Heart left ventricle (tissue), 16 donors: ENCODE measurements at regions of chr18 and their contacts with region 1.

Region 1: GRCh38 chr18:23416298-23416697 is 36.8 kb upstream of the RIOK3 start:
- DNase-seq: no peak
- ATAC-seq: peak in 3 of 4 donors; percentile 33 to 70 (median 57)
- H3K4me3 ChIP-seq: no peak overlapping the region
- H3K27ac ChIP-seq: no peak overlapping the region
- H3K4me1 ChIP-seq: peaks cover 0 to 13% (median 0%) of the 10 kb centered on the region in 12 donors
- H3K27me3 ChIP-seq: no peaks in the 10 kb centered on the region
- CTCF ChIP-seq: no peak
- POLR2A ChIP-seq: no peak

Region 2: DNA sequence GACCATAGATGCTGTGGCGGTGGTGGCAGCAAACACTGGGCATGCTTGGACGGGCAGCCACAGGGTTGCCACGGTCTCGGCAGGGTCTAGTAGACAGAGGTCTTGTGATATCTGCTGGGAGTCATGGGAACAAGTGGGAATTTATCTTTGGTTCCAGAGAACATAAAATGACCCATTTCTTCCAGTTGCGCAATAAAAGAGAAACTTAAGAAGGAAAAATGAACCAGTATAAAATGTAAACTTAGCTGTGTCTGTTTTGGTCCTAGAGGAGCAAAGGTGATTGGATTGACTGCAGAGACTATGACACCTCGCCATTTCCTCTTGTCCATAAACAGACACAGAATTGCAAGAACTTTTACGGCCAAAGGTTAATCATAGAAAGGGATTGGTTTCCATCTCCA is 615.7 kb before region 1 on chr18:
- intact Hi-C with region 1: loop called in 1 of 10 experiments (anchors 10 kb)
- DNase-seq: no peak
- ATAC-seq: peak; percentile 44 to 61 (median 54)
- H3K4me3 ChIP-seq: no peak overlapping the region
- H3K27ac ChIP-seq: peak overlapping the region in 5 of 12 donors; percentile 1 to 54 (median 29)
- H3K4me1 ChIP-seq: peaks cover 0 to 10% (median 0%) of the 10 kb centered on the region in 12 donors
- H3K27me3 ChIP-seq: no peaks in the 10 kb centered on the region
- CTCF ChIP-seq: no peak
- POLR2A ChIP-seq: no peak

Region 3: DNA sequence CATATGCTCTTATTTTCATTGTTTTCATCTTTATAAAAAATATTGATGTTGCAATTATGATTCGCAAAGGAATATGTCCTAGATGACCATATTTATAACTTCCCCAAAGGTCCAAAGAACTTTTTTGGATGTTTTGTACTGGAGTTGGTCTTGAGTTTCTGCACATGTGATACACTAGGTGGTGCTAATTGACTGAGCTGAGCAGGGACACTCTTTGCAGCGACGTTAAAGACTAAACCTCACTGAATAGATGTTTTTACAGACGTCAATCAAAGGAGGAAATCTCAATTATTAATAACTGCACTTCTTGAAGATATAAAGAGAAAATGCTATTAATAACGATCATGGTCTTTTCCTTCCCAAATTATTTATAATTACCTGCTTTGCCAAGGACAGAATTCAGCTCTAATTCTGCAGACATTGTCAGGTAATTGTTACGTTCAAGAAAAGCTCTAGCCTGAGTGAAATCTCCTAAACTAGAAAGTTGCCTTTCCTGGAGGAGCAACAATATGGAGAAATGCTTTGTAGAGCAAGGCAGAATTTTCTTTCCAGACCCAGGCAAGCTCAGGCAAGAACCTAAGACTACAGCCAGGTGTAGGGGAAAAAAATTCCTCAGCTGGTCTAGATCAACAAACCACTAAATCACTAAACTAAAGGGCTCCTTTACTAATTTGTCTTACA is 602.5 kb before region 1 on chr18:
- intact Hi-C with region 1: loop called in 2 of 10 experiments (anchors 5 to 10 kb)
- DNase-seq: no peak
- ATAC-seq: peak in 3 of 4 donors; percentile 49 to 55 (median 54)
- H3K4me3 ChIP-seq: no peak overlapping the region
- H3K27ac ChIP-seq: no peak overlapping the region
- H3K4me1 ChIP-seq: no peaks in the 10 kb centered on the region
- H3K27me3 ChIP-seq: peaks cover 0 to 9% (median 0%) of the 10 kb centered on the region in 9 donors
- CTCF ChIP-seq: peak; percentile 22 to 68 (median 39)
- POLR2A ChIP-seq: no peak

Region 4: DNA sequence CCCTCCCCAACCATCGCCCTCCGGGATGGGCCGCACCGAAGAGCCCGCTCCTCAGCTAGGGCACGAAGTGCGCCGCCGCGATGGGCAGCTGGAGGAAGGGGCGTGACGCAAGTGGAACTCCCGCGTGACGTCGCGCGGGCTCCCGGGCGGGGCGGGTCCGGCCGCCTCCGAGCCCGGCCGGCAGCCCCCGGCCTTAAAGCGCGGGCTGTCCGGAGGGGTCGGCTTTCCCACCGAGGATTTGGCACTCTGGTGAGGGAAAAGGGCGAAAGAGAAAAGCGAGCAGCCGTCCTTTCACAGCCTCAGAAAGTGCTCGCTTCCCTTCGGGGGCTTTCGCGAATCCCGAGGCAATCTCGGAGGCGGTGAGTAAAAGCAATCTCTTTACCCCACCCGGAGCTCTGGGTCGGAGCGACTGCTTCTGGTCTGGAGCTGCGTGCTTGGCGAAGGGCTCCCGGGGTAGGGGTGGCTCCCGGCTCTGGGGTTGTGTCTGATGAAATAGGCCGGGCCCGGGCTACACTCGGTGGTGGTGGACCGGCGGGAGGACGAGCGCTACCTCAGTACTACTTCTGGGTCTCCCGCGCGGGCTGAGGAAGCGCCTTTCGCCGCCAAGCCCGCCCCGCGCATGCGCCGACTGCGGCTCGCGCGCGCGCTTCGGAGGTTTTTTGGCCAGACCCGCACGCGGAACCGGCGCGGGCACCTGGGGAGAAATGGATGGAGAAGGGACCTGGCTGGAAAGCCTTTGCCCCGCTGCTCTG is 482.9 kb before region 1 on chr18 and contains the start of gene RBBP8:
- intact Hi-C with region 1: loop called in 1 of 10 experiments (anchors 10 kb)
- DNase-seq: peak; percentile 87 to 93 (median 88)
- ATAC-seq: peak; percentile 92 to 99 (median 98)
- H3K4me3 ChIP-seq: peak within 1 kb of the TSS; percentile 68 to 93 (median 78)
- H3K27ac ChIP-seq: peak within 1 kb of the TSS; percentile 83 to 99 (median 96)
- H3K4me1 ChIP-seq: peaks cover 0 to 18% (median 5%) of the 10 kb centered on the region in 12 donors
- H3K27me3 ChIP-seq: no peaks in the 10 kb centered on the region
- CTCF ChIP-seq: no peak
- POLR2A ChIP-seq: peak in 1 of 2 donors; percentile 63
- total RNA-seq, gene RBBP8: 5.1 to 12.2 (median 8.6) TPM

Region 5: DNA sequence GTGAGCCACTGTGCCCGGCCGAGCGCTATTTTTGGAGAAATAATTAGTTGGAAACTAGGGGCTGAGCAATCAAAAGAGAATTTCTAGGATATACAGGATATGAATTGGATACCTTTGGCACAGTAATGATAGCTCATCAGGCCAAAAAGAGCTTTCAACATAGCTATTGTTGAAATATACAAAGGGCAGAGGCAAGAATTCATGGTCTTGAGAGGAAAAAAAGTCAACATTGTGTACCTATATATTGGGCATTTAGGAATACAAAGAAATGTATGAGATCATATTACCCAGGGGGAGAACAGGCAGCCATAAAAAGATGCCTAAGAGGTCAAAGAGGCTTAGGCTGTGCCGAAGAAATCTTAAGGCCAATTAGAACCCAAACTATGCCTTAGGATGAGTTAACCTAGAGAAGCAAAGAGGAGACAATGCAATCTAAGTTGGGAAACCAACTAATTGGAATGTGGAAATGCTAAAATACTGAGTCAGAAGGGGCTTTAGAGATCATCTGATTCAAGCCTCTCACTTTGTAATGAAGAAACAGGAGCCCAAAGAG is 384.2 kb before region 1 on chr18:
- intact Hi-C with region 1: loop called in 4 of 10 experiments (anchors 5 to 10 kb)
- DNase-seq: no peak
- ATAC-seq: no peak
- H3K4me3 ChIP-seq: no peak overlapping the region
- H3K27ac ChIP-seq: no peak overlapping the region
- H3K4me1 ChIP-seq: no peaks in the 10 kb centered on the region
- H3K27me3 ChIP-seq: no peaks in the 10 kb centered on the region
- CTCF ChIP-seq: no peak
- POLR2A ChIP-seq: no peak